Activated CD4-positive, alpha-beta T cell treated with anti-CD3 and anti-CD28 coated beads for 36 hours (primary cell): ENCODE measurements at regions of chr1 and their contacts with region 1.

Region 1: DNA sequence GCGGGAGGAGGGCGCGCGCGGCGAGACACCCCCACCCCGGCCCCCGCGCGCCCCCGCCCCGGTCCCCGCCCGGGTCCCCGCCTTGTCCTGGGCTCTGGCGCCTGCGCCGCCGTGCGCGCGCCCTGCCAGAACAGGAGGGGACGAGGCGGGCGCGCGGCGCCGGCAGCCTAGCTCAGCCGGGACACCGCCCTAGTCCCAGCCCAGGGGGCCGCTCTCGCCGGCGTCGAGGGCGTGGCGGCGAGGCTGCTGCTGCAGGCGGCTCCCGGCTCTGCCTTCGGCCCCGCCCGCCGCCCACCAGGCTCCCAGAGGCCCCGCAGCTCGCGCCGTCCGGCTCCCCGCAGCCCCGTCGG is at the start of gene RCAN3:
- DNase-seq: peak; percentile 95
- ATAC-seq: peak; percentile 75
- H3K4me3 Mint-ChIP-seq: peak within 1 kb of the TSS; percentile 86
- H3K27ac Mint-ChIP-seq: peak within 1 kb of the TSS; percentile 94
- H3K4me1 Mint-ChIP-seq: peaks cover 59% of the 10 kb centered on the region
- H3K27me3 Mint-ChIP-seq: no peaks in the 10 kb centered on the region
- total RNA-seq, gene RCAN3: 62.3 to 67.5 TPM

Region 2: DNA sequence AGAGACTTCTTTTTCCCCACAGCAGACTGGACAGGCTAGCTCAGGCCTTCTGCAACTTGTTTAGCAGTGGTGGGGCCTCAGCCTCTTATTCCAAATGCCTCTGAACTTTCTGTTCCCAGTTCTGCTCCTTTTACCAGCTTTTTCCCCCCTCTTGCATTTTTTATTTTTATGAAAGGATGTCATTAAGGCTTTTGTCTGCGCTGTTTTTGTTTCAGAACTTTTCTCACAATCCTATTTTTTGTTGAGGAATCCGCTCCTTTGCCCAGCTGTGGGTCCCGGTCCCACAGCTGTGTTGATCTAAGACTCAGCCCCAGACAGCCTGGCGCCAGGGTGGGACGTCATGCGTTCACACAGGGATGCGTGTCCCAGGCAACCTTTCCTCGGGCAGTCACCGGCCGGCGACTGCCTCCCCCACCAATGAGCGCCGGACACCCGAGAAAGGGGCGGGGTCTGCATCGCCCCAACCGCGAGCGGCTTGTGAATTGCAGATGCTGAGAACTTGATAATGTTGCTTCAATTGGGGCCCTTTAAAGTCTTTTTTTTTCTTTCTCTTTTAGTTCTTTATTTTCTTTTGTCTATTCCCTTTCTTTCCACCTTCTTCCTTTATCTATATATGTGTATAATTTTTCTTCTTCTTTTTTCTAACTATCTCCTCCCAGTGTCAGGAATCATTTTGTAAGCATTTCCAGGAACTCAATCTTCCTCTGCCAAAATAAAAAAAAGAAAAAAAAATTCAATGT is 940.4 kb before region 1 on chr1:
- CTCF ChIA-PET with region 1: no interaction called
- POLR2A ChIA-PET with region 1: no interaction called
- intact Hi-C with region 1: no loop called
- DNase-seq: peak; percentile 56
- ATAC-seq: no peak
- H3K4me3 Mint-ChIP-seq: no peak overlapping the region
- H3K27ac Mint-ChIP-seq: no peak overlapping the region
- H3K4me1 Mint-ChIP-seq: peaks cover 39% of the 10 kb centered on the region
- H3K27me3 Mint-ChIP-seq: peaks cover 7% of the 10 kb centered on the region

Region 3: GRCh38 chr1:24481101-24481500 is 21.6 kb before region 1 on chr1:
- CTCF ChIA-PET with region 1: interaction called, 9 read pairs
- POLR2A ChIA-PET with region 1: interaction called, 10 read pairs
- intact Hi-C with region 1: loop called in 1 of 2 experiments (anchors 1 kb)
- DNase-seq: peak; percentile 81
- ATAC-seq: peak; percentile 76
- H3K4me3 Mint-ChIP-seq: peak overlapping the region; percentile 60
- H3K27ac Mint-ChIP-seq: peak overlapping the region; percentile 97
- H3K4me1 Mint-ChIP-seq: peaks cover 65% of the 10 kb centered on the region
- H3K27me3 Mint-ChIP-seq: no peaks in the 10 kb centered on the region

Region 4: DNA sequence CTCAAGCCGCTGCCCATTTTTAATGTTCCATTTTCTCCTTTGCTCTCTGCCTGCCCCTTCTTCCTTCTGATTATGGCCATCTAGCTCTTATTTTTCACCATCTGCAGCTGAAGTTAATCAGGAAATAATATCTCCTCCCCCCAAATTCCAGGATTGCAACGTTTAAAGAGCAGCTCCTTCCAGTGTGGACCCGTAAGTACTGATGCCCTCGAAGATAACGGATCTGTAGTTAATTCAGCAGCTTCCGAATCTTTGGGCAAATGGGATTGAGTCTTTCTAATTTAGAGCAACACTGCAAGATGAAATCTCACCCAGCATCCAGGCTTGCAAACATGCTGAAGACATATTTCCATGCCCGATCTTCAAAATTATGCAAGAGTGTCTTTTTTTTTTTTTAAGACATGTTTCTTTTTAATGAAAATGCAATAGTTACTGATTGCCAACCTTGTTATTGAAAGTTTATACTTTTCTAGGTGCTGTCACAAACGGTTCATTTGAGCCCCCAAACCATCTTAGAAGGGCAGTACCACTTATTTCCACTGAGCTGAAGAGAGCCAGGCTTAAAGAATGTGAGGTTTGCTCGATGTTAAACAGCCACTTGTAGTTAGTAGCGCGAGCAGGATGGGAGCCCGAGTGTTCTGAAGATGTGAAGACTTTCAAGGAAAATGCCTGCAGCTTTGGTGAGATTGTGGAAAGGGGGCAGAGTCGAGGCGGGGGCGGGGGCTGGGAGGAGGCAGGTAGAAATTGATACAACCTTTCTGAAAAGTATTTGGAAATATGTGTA is 10.9 kb before region 1 on chr1:
- CTCF ChIA-PET with region 1: interaction called, 14 read pairs
- POLR2A ChIA-PET with region 1: interaction called, 10 read pairs
- intact Hi-C with region 1: loop called (anchors 1 to 2 kb)
- DNase-seq: no peak
- ATAC-seq: no peak
- H3K4me3 Mint-ChIP-seq: no peak overlapping the region
- H3K27ac Mint-ChIP-seq: no peak overlapping the region
- H3K4me1 Mint-ChIP-seq: peaks cover 45% of the 10 kb centered on the region
- H3K27me3 Mint-ChIP-seq: no peaks in the 10 kb centered on the region

Region 5: DNA sequence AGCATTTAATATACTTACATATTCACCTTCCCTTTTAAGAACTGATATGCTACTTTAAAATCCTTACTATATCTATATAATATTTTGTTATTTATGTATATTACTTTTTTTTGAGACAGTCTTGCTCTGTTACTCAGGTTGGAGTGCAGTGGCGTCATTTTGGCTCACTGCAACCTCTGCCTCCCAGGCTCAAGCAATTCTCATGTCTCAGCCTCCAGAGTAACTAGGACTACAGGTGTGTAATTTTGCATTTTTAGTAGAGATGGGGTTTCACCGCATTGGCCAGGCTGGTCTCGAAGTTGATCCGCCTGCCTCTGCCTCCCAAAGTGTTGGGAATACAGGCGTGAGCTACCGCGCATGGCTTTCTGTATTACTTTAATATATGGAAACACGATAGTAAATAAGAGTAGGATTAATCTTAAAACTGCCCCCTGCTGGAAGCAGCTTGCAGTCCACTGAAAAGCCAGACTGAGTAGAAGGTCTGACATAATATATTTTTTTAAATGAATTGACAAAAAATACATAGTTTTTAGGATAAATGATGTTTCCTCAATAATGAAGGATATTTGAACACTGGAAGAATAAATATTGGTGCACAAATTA is 24.4 kb after region 1 on chr1:
- CTCF ChIA-PET with region 1: interaction called, 61 read pairs
- POLR2A ChIA-PET with region 1: no interaction called
- intact Hi-C with region 1: no loop called
- DNase-seq: peak; percentile 68
- ATAC-seq: peak; percentile 76
- H3K4me3 Mint-ChIP-seq: no peak overlapping the region
- H3K27ac Mint-ChIP-seq: no peak overlapping the region
- H3K4me1 Mint-ChIP-seq: peaks cover 71% of the 10 kb centered on the region
- H3K27me3 Mint-ChIP-seq: no peaks in the 10 kb centered on the region

Region 6: DNA sequence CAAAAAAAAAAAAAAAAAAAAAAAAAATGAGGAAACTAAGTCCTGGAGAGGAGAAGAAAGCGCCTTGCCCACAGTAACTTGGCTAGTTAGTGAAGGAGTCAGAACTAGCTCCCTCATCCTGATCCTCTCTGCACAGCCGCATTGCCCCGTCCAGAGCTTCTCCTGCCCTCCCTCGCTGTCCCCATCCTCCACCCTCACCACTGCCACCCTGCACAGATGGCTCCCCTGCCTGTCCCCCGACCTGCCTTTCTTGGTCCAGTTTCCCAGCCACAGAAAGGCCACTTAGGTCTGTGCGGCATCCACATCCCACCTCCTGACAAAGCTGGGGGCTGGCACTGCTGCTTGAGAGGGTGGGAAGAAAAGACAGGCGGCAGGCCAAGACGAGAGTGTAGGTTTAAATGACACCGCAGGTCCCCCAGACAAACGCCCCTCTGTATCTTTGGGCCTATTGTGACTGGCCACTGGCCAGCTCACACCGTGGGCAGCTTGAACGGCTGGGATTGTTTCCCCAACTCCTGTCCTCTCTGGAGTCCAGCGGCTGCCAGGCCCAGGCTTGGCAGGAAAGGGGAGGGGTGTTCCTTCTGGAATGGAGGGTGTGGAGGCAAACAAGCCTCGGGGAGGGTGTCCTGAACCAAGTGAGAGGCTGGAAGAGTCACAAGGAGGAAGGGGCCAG is 73.4 kb after region 1 on chr1:
- CTCF ChIA-PET with region 1: no interaction called
- POLR2A ChIA-PET with region 1: no interaction called
- intact Hi-C with region 1: no loop called
- DNase-seq: no peak
- ATAC-seq: no peak
- H3K4me3 Mint-ChIP-seq: no peak overlapping the region
- H3K27ac Mint-ChIP-seq: no peak overlapping the region
- H3K4me1 Mint-ChIP-seq: peaks cover 1% of the 10 kb centered on the region
- H3K27me3 Mint-ChIP-seq: no peaks in the 10 kb centered on the region

Region 7: DNA sequence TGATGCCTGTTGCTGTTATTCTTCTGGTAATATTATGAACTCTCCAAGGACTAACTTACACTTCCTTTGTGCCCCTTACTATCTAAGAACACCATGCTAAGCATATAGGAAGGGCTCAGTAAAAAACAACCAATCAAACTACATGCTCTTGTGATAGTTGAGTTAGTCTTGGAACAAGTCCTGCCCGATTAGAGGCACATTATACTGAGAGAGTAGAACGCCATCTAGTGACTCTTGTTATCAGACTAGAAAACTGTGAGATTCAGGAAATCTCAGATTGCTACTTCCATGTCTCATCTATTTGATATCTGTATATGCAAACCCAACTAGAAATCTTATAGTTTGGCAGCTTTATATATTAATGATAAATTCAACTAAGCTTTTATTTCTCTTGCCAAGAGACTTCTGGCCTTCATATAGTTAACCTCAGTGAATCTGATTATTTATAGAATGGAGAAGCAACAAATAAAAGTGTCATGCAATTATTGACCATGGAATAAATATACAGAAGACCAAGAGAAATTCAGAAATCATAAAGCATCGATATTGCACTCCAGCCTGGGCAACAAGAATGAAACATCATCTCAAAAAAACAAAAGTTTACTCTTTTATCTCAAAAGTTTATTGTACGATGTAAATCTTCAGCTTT is 132.6 kb after region 1 on chr1:
- CTCF ChIA-PET with region 1: interaction called, 3 read pairs
- POLR2A ChIA-PET with region 1: no interaction called
- intact Hi-C with region 1: loop called in 1 of 2 experiments (anchors 10 kb)
- DNase-seq: no peak
- ATAC-seq: peak; percentile 84
- H3K4me3 Mint-ChIP-seq: no peak overlapping the region
- H3K27ac Mint-ChIP-seq: no peak overlapping the region
- H3K4me1 Mint-ChIP-seq: peaks cover 12% of the 10 kb centered on the region
- H3K27me3 Mint-ChIP-seq: peaks cover 2% of the 10 kb centered on the region